AG04449 (cell line): ENCODE measurements at regions of chr2 and their contacts with region 1.

Region 1: DNA sequence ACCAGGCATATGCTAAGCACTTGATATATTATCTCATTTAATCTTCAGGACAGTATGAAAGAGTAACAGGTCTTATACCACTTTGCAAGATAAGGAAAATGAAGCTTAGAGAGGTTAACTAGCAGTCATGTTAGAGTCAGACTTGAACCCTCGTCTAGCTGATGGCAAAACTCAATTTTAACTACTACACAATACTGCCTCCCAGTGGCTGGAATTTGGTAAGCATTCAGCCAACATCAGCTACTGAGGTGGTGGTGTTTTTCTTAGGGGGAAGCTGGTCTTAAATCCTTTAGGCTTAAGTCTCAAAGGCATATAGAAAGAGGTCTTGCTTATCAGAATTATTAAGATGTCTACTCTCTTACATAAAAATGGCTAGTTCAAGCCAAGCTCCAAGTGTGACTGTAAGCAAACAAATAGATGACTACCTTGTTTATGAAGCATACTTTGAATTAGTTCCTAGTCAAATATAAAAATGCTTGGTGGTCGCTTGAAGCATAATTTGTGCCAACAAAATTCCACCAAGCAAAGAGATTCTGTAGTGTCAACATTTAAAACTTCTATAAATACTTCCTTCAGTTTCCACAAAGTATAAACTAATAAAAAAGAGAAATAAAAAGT is 325.4 kb upstream of the FIGN start:
- DNase-seq: no peak
- H3K4me3 ChIP-seq: no peak overlapping the region
- CTCF ChIP-seq: peak; percentile 57

Region 2: DNA sequence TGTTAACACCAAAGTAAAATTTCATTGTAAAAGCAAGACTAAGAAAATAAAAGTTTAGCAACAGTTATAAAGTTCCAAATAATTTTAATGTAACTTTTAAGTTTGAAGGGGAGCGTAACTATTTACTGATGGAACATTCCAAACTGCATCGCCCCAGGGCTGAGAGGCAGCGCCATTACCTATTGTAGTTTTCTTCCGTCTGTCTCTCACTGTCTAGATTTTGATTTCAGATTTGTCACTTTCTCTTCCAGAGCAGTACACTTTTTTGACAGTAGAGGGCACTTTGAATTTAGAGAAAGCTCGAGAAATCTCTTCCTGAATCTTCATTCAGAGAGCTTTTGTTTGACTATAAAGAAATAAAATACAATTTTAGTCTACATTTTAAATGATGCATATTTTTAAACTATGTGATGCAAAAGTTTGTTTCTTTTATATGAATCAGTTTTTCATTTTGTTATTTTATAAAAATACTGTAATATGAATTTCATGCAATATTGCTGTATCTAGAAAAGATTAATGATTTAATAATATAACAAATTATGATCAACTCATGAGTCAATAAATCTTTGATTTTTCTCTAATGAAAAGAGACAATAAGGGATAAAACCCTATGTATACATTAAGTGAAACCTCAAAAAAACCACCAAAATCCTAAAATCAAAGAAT is 715.2 kb before region 1 on chr2:
- CTCF ChIA-PET with region 1: interaction called, 12 read pairs
- POLR2A ChIA-PET with region 1: no interaction called
- DNase-seq: no peak
- H3K4me3 ChIP-seq: no peak overlapping the region
- CTCF ChIP-seq: peak; percentile 64

Region 3: DNA sequence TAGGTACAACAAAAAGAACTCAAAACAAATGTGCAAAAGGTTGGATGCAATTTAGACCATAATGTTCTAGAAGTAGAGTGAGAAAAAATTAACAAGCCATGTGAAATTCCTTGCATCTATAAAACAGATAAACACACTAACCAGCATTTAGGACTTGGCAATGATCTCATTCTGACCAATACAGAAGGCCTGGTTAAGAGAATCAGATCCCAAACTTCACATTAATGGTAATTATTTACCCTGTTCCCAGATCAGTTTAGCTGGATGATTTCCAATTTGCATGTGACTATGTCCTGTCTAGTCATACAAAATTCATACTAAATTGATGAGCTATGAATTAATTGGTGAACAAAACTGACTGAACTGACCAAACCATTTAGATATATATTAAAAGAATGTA is 227.0 kb before region 1 on chr2:
- CTCF ChIA-PET with region 1: no interaction called
- POLR2A ChIA-PET with region 1: no interaction called
- DNase-seq: no peak
- H3K4me3 ChIP-seq: no peak overlapping the region
- CTCF ChIP-seq: no peak